Body of pancreas (tissue), 4 donors: ENCODE measurements at regions of chr9 and their contacts with region 1.

Region 1: DNA sequence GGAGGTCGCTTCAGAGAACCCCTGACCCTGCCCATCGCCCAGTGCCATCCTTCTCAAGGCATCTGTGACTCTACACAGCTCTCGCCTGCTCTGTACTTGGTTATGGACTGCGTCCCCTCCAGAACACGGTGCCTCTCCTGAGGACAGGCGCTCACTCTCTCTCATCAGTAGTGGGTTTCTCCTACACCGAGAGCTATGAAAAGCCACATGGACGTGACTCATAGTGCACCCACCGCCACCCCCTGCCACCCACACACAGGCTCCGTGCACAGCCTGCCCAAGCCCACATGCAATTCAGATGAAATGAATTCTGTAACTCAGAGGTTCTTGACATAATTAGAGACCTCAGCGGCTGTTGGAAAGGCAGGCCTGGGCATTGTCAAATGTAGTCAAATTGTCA is 13.9 kb downstream of the GTF3C5 start:
- DNase-seq: no peak
- ATAC-seq: no peak
- H3K4me3 ChIP-seq: no peak overlapping the region
- H3K27ac ChIP-seq: no peak overlapping the region
- H3K4me1 ChIP-seq: peaks cover 34% of the 10 kb centered on the region
- H3K27me3 ChIP-seq: no peaks in the 10 kb centered on the region
- CTCF ChIP-seq: no peak
- POLR2A ChIP-seq: no peak

Region 2: DNA sequence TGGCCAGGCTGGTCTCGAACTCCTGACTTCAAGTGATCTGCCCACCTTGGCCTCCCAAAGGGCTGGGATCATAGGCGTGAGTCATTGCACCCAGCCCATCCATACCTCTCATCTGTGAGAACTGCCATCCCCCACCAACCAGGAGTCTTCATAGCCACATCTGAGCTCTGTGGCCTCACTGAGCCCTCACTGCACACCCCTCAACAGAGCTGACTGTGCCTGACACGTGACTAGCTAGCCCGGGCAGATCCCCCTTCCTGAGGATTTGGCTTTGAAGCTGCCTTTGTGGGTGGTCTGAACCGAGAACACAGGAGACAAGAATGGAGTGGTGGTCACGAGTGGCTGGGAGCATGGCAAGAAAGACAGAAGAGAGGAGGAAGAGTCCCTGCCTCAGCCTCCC is 182.1 kb before region 1 on chr9:
- intact Hi-C with region 1: no loop called
- DNase-seq: no peak
- ATAC-seq: no peak
- H3K4me3 ChIP-seq: no peak overlapping the region
- H3K27ac ChIP-seq: no peak overlapping the region
- H3K4me1 ChIP-seq: no peaks in the 10 kb centered on the region
- H3K27me3 ChIP-seq: no peaks in the 10 kb centered on the region
- CTCF ChIP-seq: no peak
- POLR2A ChIP-seq: no peak

Region 3: DNA sequence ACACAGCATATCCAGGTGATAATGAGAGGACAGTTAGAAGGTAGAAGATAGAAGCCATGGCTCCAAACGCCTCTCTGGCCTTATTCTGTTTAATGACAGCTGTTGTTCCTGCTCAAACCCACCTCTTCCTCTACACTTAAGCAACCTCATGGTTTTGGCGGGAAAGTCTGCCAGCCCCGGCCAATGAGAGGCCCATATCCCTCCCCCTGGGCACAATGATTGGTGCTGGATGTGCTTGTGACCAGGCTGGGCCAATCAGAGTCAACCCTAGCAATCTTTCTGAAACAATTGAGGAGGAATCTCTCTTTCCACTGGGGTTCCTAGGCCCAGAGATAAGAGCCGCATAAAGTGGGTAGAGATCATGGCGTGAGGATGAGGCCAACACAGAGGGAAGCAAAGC is 70.9 kb before region 1 on chr9:
- intact Hi-C with region 1: no loop called
- DNase-seq: no peak
- ATAC-seq: no peak
- H3K4me3 ChIP-seq: no peak overlapping the region
- H3K27ac ChIP-seq: no peak overlapping the region
- H3K4me1 ChIP-seq: peaks cover 17% of the 10 kb centered on the region
- H3K27me3 ChIP-seq: no peaks in the 10 kb centered on the region
- CTCF ChIP-seq: no peak
- POLR2A ChIP-seq: no peak

Region 4: DNA sequence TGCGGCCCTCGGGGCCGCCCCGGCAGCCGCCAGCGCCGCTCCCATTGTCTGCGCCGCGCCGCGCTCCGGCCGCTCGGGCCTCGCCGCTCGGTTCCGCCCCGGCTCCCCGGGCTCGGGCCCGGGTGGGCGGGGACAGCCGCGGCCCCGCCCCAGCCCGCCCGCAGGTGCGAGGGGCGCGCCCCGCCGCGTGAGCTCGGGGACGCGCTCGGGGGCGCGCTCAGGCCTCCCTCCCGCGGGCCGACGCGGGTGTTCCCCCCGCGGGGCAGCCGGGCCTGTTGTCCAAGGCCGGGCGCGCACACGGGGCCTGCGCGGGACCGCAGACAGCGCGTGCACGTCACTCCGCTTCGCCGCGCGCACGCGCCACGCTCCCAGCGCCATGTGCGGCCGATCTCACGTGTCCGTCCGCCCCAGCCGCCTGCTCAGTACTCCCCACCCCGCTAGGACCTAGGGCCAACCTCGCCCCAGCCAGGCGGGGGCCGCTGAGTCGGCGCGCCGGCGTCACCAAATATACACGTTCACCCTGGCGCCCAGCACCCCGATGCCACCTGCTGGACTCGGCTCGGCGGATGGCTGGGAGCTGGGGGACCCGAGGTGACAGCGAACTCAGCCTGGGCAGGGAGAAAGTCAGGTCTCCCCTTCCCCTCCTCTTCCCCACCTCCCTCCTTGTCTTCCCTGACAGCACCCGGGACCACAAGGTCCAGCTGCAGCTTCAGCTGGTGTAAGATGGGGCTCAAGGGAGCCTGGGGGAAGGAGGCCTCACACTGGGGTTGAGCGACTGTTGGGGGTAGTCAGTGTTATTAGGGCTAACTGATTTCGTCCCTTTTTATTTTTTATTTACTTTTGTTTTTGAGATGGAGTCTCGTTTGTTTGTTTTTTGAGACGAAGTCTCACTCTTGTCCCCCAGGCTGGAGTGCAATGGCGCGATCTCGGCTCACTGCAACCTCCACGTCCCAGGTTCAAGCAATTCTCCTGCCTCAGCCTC is 104.8 kb after region 1 on chr9:
- intact Hi-C with region 1: loop called (anchors 5 kb)
- DNase-seq: peak; percentile 93 to 96 (median 96)
- ATAC-seq: peak; percentile 85
- H3K4me3 ChIP-seq: no peak overlapping the region
- H3K27ac ChIP-seq: peak overlapping the region; percentile 86 to 95 (median 88)
- H3K4me1 ChIP-seq: peaks cover 42% of the 10 kb centered on the region
- H3K27me3 ChIP-seq: no peaks in the 10 kb centered on the region
- CTCF ChIP-seq: peak in 5 of 7 experiments; percentile 14 to 60 (median 54)
- POLR2A ChIP-seq: peak; percentile 58 to 79 (median 79)